Posterior vena cava (tissue), 2 donors: ENCODE measurements at regions of chr7 and their contacts with region 1.

Region 1: GRCh38 chr7:31058122-31058521 is 6.0 kb downstream of the ADCYAP1R1 start:
- DNase-seq: no peak

Region 2: GRCh38 chr7:31000161-31000693 is 57.9 kb before region 1 on chr7:
- intact Hi-C with region 1: no loop called
- DNase-seq: peak; percentile 52

Region 3: GRCh38 chr7:31095286-31096197 is 37.4 kb after region 1 on chr7:
- intact Hi-C with region 1: loop called in 1 of 2 experiments (anchors 1 kb)
- DNase-seq: peak; percentile 78